K562 (cell line): ENCODE measurements at regions of chr4 and their contacts with region 1.

Region 1: DNA sequence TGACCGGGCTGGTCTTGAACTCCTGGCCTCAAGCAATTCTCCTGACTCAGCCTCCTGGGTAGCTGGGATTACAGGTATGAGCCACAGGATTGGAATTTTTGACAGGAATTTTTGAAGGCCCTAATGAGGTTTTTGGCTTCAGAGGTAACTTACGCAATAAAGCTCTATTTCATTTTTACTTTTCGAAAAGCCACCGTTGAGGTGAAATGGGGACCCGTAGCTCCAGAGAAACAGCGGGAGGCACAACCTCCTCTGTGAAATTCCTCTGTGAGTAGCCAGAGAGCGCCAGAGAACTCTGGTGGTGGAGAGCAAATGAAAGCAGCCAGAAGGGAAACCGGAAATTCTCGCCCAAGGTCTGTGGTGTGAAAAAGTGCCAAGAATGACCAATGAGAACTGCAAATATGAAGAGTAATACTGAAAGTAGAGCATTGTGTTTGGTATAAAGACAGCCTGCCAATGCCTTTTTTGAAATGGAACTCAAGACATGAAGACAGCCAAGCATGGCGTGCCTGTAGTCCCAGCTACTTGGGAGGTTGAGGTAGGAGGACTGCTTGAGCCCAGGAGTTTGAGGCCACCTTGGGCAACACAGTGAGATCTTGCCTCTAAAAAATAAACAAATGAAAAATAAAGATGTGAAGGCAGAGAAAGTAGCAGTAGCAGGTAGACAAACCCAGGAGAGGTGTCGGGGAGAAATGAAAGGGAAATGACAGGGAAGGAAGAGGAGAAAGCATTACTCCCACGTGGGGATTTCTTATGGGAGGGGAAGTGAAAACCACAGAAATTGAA is 33.0 kb upstream of the TMEM131L start:
- DNase-seq: peak; percentile 50 to 85 (median 70)
- ATAC-seq: peak; percentile 95
- H3K4me3 ChIP-seq: no peak overlapping the region
- H3K27ac ChIP-seq: peak overlapping the region; percentile 49; the same call in 1 of the 3 replicates
- H3K4me1 ChIP-seq: peaks cover 10 to 11% of the 10 kb centered on the region in 2 experiments; a peak in 4 of 5 replicates
- H3K27me3 ChIP-seq: no peaks in the 10 kb centered on the region
- CTCF ChIP-seq: peak; percentile 88 to 93 (median 88)
- EP300 ChIP-seq: no peak; the same call in 1 of the 2 replicates
- POLR2A ChIP-seq: no peak
- RAD21 ChIP-seq: peak; percentile 84 to 94

Region 2: GRCh38 chr4:153466081-153466948 is 33.2 kb after region 1 on chr4 and contains the start of gene TMEM131L:
- CTCF ChIA-PET with region 1: no interaction called
- POLR2A ChIA-PET with region 1: no interaction called
- in situ Hi-C with region 1: no loop called
- intact Hi-C with region 1: loop called (anchors 1 kb)
- DNase-seq: peak; percentile 91 to 94 (median 92)
- ATAC-seq: peak; percentile 82
- H3K4me3 ChIP-seq: peak within 1 kb of the TSS; percentile 83
- H3K27ac ChIP-seq: peak within 1 kb of the TSS; percentile 86
- H3K4me1 ChIP-seq: peaks cover 29 to 40% of the 10 kb centered on the region in 2 experiments
- H3K27me3 ChIP-seq: no peaks in the 10 kb centered on the region
- CTCF ChIP-seq: peak; percentile 30 to 68 (median 46); a peak in 3 of 6 replicates
- EP300 ChIP-seq: no peak; the same call in 1 of the 2 replicates
- POLR2A ChIP-seq: peak; percentile 78
- RAD21 ChIP-seq: peak in 1 of 2 experiments; percentile 41; a peak in 2 of 4 replicates
- polyA plus RNA-seq, gene TMEM131L: 1.2 to 1.6 TPM

Region 3: DNA sequence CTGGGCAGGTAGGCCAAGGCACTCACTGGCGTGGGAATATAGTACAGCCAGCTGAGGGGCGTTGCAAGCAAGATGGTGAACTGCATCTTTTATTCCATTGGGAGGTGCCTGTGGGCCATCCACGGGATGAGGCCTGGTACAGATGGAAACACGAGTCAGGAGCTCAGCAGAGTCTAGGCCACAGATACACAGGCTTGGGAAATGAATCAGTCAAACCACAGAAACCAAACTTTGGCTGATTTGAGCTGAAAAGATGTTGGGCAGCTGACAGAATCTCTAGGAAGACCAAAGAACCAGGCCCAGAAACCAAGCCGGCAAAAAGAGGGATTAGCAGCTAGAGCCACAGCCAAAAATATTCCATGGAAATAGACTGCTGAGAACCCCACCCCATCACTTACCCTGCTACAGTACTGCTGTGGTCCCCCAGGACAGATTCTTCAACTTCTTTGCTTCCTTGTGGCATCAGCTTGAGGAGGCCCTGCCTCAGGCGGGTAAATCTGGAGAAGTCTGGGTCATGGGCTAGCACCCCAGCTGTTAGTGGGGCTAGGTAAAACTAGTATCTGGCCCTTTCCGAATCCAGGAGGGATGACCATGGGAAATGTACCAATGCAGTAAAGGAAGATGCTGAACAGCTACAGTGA is 108.4 kb after region 1 on chr4:
- CTCF ChIA-PET with region 1: interaction called, 3 read pairs
- POLR2A ChIA-PET with region 1: interaction called, 3 read pairs
- in situ Hi-C with region 1: no loop called
- intact Hi-C with region 1: loop called (anchors 1 kb)
- DNase-seq: no peak
- ATAC-seq: no peak
- H3K4me3 ChIP-seq: no peak overlapping the region
- H3K27ac ChIP-seq: no peak overlapping the region
- H3K4me1 ChIP-seq: no peaks in the 10 kb centered on the region; a peak in 2 of 5 replicates
- H3K27me3 ChIP-seq: no peaks in the 10 kb centered on the region
- CTCF ChIP-seq: no peak
- EP300 ChIP-seq: no peak
- POLR2A ChIP-seq: no peak
- RAD21 ChIP-seq: no peak

Region 4: DNA sequence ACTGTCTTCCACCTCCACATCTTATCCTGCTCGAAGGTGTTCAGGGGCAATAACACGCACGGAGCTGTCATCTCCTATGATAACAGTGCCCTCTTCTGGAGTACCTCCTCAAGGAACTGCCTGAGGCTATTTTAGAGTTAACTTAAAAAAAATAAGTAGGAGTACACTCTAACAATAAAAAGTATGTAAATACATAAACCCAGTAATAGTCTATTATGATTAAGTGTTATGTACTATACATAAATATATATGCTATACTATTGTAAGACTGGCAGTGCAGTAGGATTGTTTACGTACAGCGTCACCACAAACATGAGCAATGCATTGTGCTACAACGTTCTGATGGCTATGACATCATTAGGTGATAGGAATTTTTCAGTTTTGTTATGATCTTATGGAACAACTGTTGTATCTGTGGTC is 216.4 kb after region 1 on chr4:
- CTCF ChIA-PET with region 1: no interaction called
- POLR2A ChIA-PET with region 1: no interaction called
- in situ Hi-C with region 1: no loop called
- intact Hi-C with region 1: loop called (anchors 2 kb)
- DNase-seq: peak in 1 of 4 experiments; percentile 62
- ATAC-seq: peak; percentile 87
- H3K4me3 ChIP-seq: no peak overlapping the region
- H3K27ac ChIP-seq: no peak overlapping the region
- H3K4me1 ChIP-seq: no peaks in the 10 kb centered on the region; a peak in 1 of 5 replicates
- H3K27me3 ChIP-seq: peaks cover 0 to 12% of the 10 kb centered on the region in 2 experiments; a peak in 2 of 5 replicates
- CTCF ChIP-seq: peak; percentile 57 to 68 (median 57)
- EP300 ChIP-seq: no peak
- POLR2A ChIP-seq: no peak
- RAD21 ChIP-seq: peak; percentile 56 to 74

Region 5: GRCh38 chr4:153750197-153750817 is 317.1 kb after region 1 on chr4:
- CTCF ChIA-PET with region 1: no interaction called
- POLR2A ChIA-PET with region 1: no interaction called
- in situ Hi-C with region 1: no loop called
- intact Hi-C with region 1: loop called (anchors 10 kb)
- DNase-seq: peak; percentile 29 to 78 (median 48)
- ATAC-seq: peak; percentile 92
- H3K4me3 ChIP-seq: no peak overlapping the region
- H3K27ac ChIP-seq: no peak overlapping the region
- H3K4me1 ChIP-seq: no peaks in the 10 kb centered on the region
- H3K27me3 ChIP-seq: peaks cover 4 to 27% of the 10 kb centered on the region in 2 experiments
- CTCF ChIP-seq: peak; percentile 69 to 81 (median 78); a peak in 5 of 6 replicates
- EP300 ChIP-seq: no peak
- POLR2A ChIP-seq: no peak
- RAD21 ChIP-seq: peak; percentile 46 to 77